ENCODE measurements at regions of chr14 and their contacts with region 1.

Region 1: GRCh38 chr14:61296719-61297502 is 15.8 kb upstream of the TMEM30B start:
- DNase-seq: no peak

Region 2: DNA sequence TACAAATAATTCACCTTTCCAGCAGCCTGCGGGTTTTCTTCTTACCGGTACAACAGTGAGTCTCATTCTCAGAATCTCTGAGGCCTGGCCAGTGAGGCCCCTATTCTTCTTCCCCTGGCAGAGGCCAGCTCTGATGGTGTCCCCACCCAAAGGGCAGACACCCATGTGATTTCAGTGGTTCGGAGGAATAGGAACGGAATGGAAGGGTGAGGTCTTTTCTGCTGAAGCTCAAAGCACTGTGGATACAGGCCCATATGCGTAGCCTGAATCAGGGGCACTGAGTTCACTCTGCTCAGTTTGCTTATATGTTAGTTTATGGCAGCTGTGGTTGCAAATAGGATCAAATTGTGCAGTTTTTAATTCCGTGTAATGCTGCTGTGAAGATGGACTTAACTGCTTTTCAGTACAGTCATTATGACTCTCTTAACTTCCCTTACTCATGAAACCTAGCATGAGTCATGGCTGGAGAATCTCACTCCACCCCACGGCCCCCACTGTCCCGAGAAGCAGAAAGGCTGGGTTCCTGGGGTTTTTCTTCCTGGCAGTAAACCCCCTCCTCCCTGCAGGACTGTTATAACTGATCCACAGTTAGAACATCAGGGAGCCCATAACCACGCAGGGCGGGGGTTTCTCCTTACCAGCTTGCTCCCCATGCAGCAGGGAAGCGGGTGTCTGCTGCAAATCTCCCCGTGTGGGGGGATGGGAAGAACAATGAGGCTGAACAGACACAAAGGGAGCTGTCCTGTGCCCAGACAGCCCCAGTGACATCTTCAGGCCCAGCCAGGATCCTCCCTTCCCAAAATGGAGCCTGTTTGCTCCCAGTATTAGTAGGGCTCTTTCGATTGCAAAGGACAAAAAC is 193.2 kb before region 1 on chr14:
- intact Hi-C with region 1: no loop called
- DNase-seq: no peak

Region 3: GRCh38 chr14:61456720-61457119 is 159.8 kb after region 1 on chr14:
- intact Hi-C with region 1: loop called (anchors 5 kb)
- DNase-seq: peak; percentile 89

Region 4: DNA sequence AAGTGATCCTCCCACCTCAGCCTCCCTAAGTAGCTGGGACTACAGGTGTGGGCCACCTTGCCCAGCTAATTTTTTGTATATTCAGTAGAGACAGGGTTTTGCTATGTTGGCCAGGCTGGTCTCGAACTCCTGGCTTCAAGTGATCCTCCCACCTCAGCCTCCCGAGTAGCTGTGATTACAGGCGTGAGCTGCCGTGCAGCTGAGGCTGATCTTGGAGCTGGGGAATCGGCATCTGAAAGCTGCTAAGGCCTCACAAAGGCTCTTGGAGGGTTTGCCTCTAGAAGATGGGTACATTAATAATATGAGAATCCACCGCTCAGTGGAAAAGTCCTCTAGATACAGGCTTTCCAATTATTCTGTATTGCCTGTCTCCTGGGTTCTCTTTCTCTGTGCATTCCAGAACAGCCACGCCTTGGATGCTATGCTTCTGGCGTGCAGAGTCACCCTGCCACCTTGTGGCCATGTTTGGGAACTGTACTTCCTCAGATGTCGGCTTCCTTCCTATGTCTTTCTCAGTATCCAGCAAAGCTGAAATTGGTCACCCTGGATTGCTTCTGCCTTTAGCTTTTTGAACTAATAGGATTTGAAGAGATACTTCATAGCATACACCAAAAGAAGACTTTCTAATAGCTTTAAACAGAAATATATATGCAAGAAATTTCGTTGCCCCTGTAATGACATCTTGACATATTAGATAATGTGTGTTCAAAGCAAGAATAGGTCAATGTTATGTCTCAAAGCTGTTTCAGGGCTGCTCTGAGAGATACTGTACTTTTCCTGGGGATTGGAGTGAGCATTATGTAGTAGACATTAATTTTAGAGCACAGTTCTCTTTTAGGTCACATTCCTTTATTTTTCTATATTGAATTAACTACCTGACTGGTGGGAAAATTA is 540.7 kb after region 1 on chr14:
- intact Hi-C with region 1: loop called (anchors 5 kb)
- DNase-seq: peak; percentile 89

Region 5: GRCh38 chr14:62126879-62127478 is 830.1 kb after region 1 on chr14:
- intact Hi-C with region 1: loop called (anchors 5 kb)
- DNase-seq: no peak

Measured in cardiac septum (tissue), 1 donor.